MCF 10A (cell line): ENCODE measurements at regions of chr16 and their contacts with region 1.

Region 1: GRCh38 chr16:3282730-3283524 is at the start of gene ZNF263:
- DNase-seq: peak; percentile 99
- H3K4me3 Mint-ChIP-seq: peak within 1 kb of the TSS; percentile 96
- H3K27ac Mint-ChIP-seq: peak within 1 kb of the TSS; percentile 99
- H3K4me1 Mint-ChIP-seq: no peaks in the 10 kb centered on the region
- H3K27me3 Mint-ChIP-seq: no peaks in the 10 kb centered on the region
- CTCF ChIP-seq: no peak
- total RNA-seq, gene ZNF263: 28.3 and 30.9 TPM in 2 replicates

Region 2: DNA sequence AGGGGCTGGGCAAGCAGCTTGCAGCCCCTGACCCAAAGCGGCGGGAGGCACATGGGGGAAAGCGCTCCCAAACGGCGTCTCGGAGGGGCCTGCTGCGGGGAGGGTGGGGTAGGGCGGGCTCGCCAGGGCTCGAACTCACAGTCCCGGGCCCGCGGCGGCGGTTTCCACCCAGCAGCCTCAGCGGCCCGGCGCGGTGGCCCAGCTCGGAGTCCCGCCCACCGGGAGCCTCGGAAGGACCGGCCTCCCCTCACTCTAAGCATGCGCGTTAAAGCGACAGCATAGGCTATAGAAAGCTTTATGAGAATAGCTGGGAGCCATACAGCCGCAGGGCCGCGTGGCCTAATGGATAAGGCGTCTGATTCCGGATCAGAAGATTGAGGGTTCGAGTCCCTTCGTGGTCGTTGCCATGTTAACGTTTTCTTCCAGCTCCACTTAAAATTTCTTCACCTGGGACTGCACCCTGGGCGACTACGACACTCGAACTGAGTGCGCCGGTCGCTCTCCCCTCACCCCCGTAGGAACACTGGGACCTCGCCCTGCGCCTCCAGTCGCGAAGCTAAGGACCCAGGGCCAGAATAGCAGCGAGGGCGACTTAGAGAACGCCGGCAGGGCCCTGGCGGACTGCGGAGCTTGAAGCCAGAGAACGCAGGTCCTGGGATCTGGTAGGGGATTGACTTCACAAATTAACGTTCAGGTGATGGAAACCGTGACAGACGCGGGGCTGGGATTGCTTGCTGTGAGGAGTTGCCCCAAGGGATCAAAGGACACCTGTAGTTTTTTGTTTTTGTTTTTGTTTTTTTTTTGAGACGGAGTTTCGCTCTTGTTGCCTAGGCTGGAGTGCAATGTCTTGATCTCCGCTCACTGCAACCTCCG is 132.3 kb before region 1 on chr16:
- CTCF ChIA-PET with region 1: no interaction called
- POLR2A ChIA-PET with region 1: interaction called, 13 read pairs
- intact Hi-C with region 1: no loop called
- DNase-seq: peak; percentile 98
- H3K4me3 Mint-ChIP-seq: peak overlapping the region; percentile 83
- H3K27ac Mint-ChIP-seq: peak overlapping the region; percentile 87
- H3K4me1 Mint-ChIP-seq: peaks cover 10% of the 10 kb centered on the region
- H3K27me3 Mint-ChIP-seq: no peaks in the 10 kb centered on the region
- CTCF ChIP-seq: no peak

Region 3: GRCh38 chr16:3182608-3183444 is 100.1 kb before region 1 on chr16:
- CTCF ChIA-PET with region 1: no interaction called
- POLR2A ChIA-PET with region 1: interaction called, 3 read pairs
- intact Hi-C with region 1: loop called (anchors 1 kb)
- DNase-seq: peak; percentile 72
- H3K4me3 Mint-ChIP-seq: peak overlapping the region; percentile 87
- H3K27ac Mint-ChIP-seq: peak overlapping the region; percentile 87
- H3K4me1 Mint-ChIP-seq: peaks cover 6% of the 10 kb centered on the region
- H3K27me3 Mint-ChIP-seq: no peaks in the 10 kb centered on the region
- CTCF ChIP-seq: no peak

Region 4: GRCh38 chr16:3305109-3306068 is 22.5 kb after region 1 on chr16 and contains the starts of genes TIGD7 and ZNF75A:
- CTCF ChIA-PET with region 1: interaction called, 5 read pairs
- POLR2A ChIA-PET with region 1: interaction called, 42 read pairs
- intact Hi-C with region 1: no loop called
- DNase-seq: peak; percentile 81
- H3K4me3 Mint-ChIP-seq: peak within 1 kb of the TSS; percentile 70
- H3K27ac Mint-ChIP-seq: peak within 1 kb of the TSS; percentile 54
- H3K4me1 Mint-ChIP-seq: no peaks in the 10 kb centered on the region
- H3K27me3 Mint-ChIP-seq: no peaks in the 10 kb centered on the region
- CTCF ChIP-seq: no peak
- total RNA-seq, gene TIGD7: 3.4 and 5.5 TPM in 2 replicates
- total RNA-seq, gene ZNF75A: 24.3 and 28.2 TPM in 2 replicates

Region 5: GRCh38 chr16:3443108-3444031 is 160.4 kb after region 1 on chr16 and contains the starts of genes NAA60 and ZNF597:
- CTCF ChIA-PET with region 1: no interaction called
- POLR2A ChIA-PET with region 1: interaction called, 43 read pairs
- intact Hi-C with region 1: no loop called
- DNase-seq: peak; percentile 93
- H3K4me3 Mint-ChIP-seq: peak within 1 kb of the TSS; percentile 87
- H3K27ac Mint-ChIP-seq: peak within 1 kb of the TSS; percentile 96
- H3K4me1 Mint-ChIP-seq: no peaks in the 10 kb centered on the region
- H3K27me3 Mint-ChIP-seq: no peaks in the 10 kb centered on the region
- CTCF ChIP-seq: no peak
- total RNA-seq, gene NAA60: 38.6 and 40.8 TPM in 2 replicates
- total RNA-seq, gene ZNF597: 2.3 and 2.5 TPM in 2 replicates